ENCODE measurements at regions of chr14 and their contacts with region 1.

Region 1: GRCh38 chr14:102442241-102443211 is 67.0 kb downstream of the ANKRD9 start:
- DNase-seq: no peak
- H3K4me3 ChIP-seq: no peak overlapping the region
- H3K27ac ChIP-seq: no peak overlapping the region
- H3K4me1 ChIP-seq: no peaks in the 10 kb centered on the region
- H3K27me3 ChIP-seq: no peaks in the 10 kb centered on the region
- CTCF ChIP-seq: no peak

Region 2: GRCh38 chr14:102509744-102510615 is 67.5 kb after region 1 on chr14 and contains the start of gene ANKRD9:
- intact Hi-C with region 1: loop called (anchors 5 kb)
- DNase-seq: peak; percentile 95 to 98 (median 97)
- H3K4me3 ChIP-seq: peak within 1 kb of the TSS; percentile 46 to 76 (median 66)
- H3K27ac ChIP-seq: peak within 1 kb of the TSS; percentile 91 to 93
- H3K4me1 ChIP-seq: peaks cover 0 to 13% (median 4%) of the 10 kb centered on the region in 3 donors
- H3K27me3 ChIP-seq: no peaks in the 10 kb centered on the region
- CTCF ChIP-seq: no peak
- total RNA-seq, gene ANKRD9: 18.7 TPM

Region 3: GRCh38 chr14:103144085-103144484 is 701.6 kb after region 1 on chr14:
- intact Hi-C with region 1: no loop called
- DNase-seq: peak in 1 of 5 donors; percentile 0
- H3K4me3 ChIP-seq: no peak overlapping the region
- H3K27ac ChIP-seq: no peak overlapping the region
- H3K4me1 ChIP-seq: no peaks in the 10 kb centered on the region
- H3K27me3 ChIP-seq: no peaks in the 10 kb centered on the region
- CTCF ChIP-seq: no peak

Measured in kidney (tissue), 22 donors.